ENCODE measurements at regions of chr15 and their contacts with region 1.

Region 1: GRCh38 chr15:77118882-77119321 is 48.0 kb upstream of the TSPAN3 start:
- DNase-seq: peak in 2 of 5 donors; percentile 37 to 38
- ATAC-seq: peak; percentile 72 to 79 (median 76)
- H3K4me3 ChIP-seq: no peak overlapping the region
- H3K27ac ChIP-seq: peak overlapping the region in 1 of 12 donors; percentile 4
- H3K4me1 ChIP-seq: peaks cover 0 to 34% (median 17%) of the 10 kb centered on the region in 12 donors
- H3K27me3 ChIP-seq: no peaks in the 10 kb centered on the region
- CTCF ChIP-seq: peak; percentile 49 to 88 (median 75)
- POLR2A ChIP-seq: no peak

Region 2: DNA sequence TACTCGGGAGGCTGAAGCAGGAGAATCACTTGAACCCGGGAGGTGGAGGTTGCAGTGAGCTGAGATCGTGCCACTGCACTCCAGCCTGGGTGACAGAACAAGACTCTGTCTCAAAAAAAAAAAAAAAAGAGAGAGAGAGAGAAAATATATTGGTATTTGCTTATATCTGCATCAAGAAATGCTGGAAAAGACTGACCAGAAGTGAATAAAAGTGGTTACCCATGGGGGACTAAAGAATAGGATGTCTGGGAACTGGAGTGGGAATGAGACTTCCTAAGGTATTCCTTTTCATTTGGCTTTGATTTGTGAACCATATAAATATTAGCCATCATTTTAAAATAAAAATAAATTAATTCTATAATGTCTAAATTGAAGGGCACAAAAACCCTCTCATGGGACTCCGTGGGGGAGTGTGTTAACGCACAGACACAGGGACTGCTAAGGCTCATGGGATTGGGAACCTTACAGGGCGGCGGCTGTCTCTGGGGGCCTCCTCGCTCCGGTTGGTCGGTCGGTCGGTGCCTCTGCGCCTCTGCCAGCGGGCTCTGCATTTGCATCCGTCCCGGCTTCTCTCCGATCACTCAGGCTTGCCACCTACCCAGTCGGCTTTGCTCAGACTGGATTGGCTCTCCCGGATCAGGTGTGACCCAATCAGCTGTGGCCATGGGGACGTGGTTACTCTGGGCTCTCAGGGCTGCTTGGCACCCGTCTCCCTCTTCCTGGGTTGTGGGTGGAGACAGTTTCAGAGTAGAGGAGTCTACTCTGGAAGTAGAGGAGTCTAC is 35.3 kb before region 1 on chr15:
- intact Hi-C with region 1: no loop called
- DNase-seq: peak; percentile 82 to 93 (median 87)
- ATAC-seq: peak; percentile 98 to 99 (median 99)
- H3K4me3 ChIP-seq: peak overlapping the region in 11 of 12 donors; percentile 4 to 52 (median 33)
- H3K27ac ChIP-seq: peak overlapping the region in 11 of 12 donors; percentile 2 to 58 (median 40)
- H3K4me1 ChIP-seq: peaks cover 0 to 12% (median 8%) of the 10 kb centered on the region in 12 donors
- H3K27me3 ChIP-seq: no peaks in the 10 kb centered on the region
- CTCF ChIP-seq: no peak
- POLR2A ChIP-seq: no peak

Region 3: GRCh38 chr15:77168616-77169015 is 49.7 kb after region 1 on chr15:
- intact Hi-C with region 1: loop called in 1 of 10 experiments (anchors 5 kb)
- DNase-seq: no peak
- ATAC-seq: no peak
- H3K4me3 ChIP-seq: no peak overlapping the region
- H3K27ac ChIP-seq: no peak overlapping the region
- H3K4me1 ChIP-seq: peaks cover 0 to 31% (median 10%) of the 10 kb centered on the region in 12 donors
- H3K27me3 ChIP-seq: no peaks in the 10 kb centered on the region
- CTCF ChIP-seq: no peak
- POLR2A ChIP-seq: no peak

Region 4: DNA sequence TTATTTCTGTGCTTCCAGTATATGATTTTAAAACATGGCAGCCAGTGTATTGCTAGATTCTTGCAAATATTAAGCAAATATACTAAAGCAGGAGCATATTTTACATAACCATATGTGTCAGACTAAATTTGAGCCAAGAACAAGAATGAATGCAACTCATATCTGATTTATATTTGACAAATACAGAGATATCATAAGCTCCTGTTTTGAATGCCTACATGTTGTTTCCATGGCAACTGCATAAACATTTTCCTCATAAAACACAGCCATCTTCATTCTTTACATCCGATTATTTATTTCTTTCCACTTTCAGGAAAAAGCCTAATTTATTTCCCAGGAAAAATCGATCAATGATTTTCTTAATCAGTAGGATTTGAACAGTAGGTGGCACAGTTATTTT is 124.2 kb after region 1 on chr15:
- intact Hi-C with region 1: no loop called
- DNase-seq: no peak
- ATAC-seq: no peak
- H3K4me3 ChIP-seq: no peak overlapping the region
- H3K27ac ChIP-seq: no peak overlapping the region
- H3K4me1 ChIP-seq: no peaks in the 10 kb centered on the region
- H3K27me3 ChIP-seq: no peaks in the 10 kb centered on the region
- CTCF ChIP-seq: no peak
- POLR2A ChIP-seq: no peak

Region 5: DNA sequence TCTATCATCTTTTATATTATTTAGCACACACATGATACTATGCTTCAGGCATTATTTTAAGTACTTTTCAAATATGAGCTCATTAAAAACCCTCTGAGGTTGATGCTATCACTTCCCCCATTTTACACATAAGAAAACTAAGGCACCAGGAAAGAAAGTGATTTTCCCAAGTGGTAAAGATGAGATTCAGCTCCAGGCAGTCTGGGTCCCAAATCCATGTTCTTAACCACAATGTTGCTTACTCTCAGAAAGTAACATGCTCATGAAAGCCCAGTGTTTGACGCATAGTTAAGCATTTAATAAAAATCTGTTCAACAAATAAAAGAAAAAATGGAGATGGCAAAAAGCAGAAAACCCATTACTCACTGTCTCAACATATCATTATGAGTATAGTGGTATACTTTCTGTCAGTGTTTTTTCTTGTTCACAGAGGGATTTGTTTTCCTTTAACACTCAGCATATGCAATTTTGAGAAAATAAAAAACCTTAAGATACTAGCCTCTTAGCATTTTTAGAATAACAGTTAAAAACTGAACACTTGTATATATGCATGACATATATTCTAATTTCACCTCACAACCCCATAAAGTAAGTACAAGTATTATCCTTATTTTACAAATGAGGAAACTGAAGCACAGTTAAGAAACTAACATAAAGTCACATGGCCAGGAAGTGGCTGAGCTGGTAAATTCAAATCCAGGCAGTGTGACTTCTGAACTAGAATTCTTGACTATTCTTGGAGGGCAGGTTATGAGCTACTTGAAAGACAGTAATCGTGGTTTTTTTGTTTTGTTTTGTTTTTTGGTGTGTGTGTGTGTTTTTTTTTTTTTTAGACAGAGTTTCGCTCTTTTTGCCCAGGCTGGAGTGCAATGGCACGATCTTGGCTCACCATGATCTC is 290.6 kb after region 1 on chr15:
- intact Hi-C with region 1: loop called in 2 of 10 experiments (anchors 5 to 10 kb)
- DNase-seq: no peak
- ATAC-seq: no peak
- H3K4me3 ChIP-seq: no peak overlapping the region
- H3K27ac ChIP-seq: peak overlapping the region in 1 of 12 donors; percentile 60
- H3K4me1 ChIP-seq: peaks cover 0 to 59% (median 45%) of the 10 kb centered on the region in 12 donors
- H3K27me3 ChIP-seq: no peaks in the 10 kb centered on the region
- CTCF ChIP-seq: no peak
- POLR2A ChIP-seq: no peak

Region 6: DNA sequence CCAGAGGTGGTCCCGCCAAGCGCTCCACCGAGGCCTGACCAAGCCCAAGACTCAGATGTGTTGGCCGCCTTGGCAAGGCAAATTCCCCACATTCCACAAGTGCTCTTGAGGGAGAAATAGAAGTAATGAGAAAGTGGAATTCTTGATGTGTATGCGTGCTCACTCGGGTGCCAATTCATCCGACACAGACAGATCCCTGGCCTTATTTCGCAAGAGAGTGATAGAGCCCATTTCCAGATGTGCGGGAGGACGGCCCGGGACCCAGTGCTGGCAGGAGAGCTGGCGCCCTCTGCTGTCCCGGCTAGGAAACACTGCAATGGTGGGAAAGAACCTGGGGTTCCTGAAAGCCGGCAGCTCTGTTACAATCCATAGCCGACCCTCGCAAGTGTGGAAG is 377.8 kb after region 1 on chr15:
- intact Hi-C with region 1: loop called in 8 of 10 experiments (anchors 2 to 10 kb)
- DNase-seq: peak; percentile 88 to 92 (median 90)
- ATAC-seq: peak; percentile 77 to 85 (median 82)
- H3K4me3 ChIP-seq: peak overlapping the region in 9 of 12 donors; percentile 8 to 39 (median 22)
- H3K27ac ChIP-seq: peak overlapping the region; percentile 53 to 96 (median 90)
- H3K4me1 ChIP-seq: peaks cover 3 to 85% (median 67%) of the 10 kb centered on the region in 12 donors
- H3K27me3 ChIP-seq: no peaks in the 10 kb centered on the region
- CTCF ChIP-seq: peak; percentile 92 to 98 (median 96)
- POLR2A ChIP-seq: no peak

Region 7: GRCh38 chr15:77543159-77543882 is 424.4 kb after region 1 on chr15:
- intact Hi-C with region 1: loop called (anchors 1 to 5 kb)
- DNase-seq: peak; percentile 87 to 94 (median 90)
- ATAC-seq: peak; percentile 77 to 93 (median 90)
- H3K4me3 ChIP-seq: peak overlapping the region in 11 of 12 donors; percentile 7 to 57 (median 44)
- H3K27ac ChIP-seq: peak overlapping the region in 11 of 12 donors; percentile 53 to 86 (median 68)
- H3K4me1 ChIP-seq: peaks cover 4 to 54% (median 48%) of the 10 kb centered on the region in 12 donors
- H3K27me3 ChIP-seq: no peaks in the 10 kb centered on the region
- CTCF ChIP-seq: peak in 11 of 12 donors; percentile 90 to 99 (median 97)
- POLR2A ChIP-seq: peak in 1 of 2 donors; percentile 26

Region 8: DNA sequence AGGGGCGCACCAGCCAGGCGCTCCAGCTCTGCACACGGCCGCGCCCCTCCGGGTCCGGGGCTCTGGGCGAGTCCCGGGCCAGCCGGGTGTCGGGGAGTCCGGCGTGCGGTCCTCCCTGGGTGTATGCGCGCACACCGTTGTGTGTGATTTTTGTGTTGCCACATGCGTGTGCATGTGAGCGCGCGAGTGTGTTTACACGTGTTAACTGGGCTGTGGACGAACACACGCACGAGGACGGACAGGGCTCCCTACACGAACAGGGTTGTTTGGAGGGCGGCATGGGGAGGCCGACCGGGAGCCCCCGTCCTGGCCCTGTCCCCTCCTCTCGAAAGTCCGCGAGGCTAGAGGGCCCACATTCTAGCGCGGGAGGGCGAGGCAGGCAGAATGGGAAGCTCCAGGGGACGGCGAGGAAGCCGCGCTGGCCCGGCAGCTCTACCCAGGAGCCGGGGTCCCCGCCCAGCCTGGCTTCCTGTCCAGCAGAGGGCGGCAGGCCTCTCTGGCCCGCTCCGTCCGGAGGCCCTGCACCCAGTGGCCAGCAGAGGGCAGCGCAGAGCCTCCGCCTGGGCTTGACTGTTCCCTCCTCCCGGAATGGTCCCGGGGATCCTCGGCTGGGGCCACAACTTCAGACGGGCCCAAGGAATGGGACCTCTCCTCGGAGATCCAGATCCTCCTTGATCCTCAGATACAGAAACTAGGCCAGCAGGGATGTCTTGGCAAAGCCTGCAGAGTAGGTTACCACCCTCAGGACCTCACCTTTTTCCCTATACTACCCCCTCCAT is 514.4 kb after region 1 on chr15:
- intact Hi-C with region 1: loop called in 3 of 10 experiments (anchors 10 kb)
- DNase-seq: peak; percentile 89 to 95 (median 90)
- ATAC-seq: peak; percentile 86 to 97 (median 94)
- H3K4me3 ChIP-seq: peak overlapping the region; percentile 40 to 65 (median 56)
- H3K27ac ChIP-seq: peak overlapping the region in 6 of 12 donors; percentile 5 to 65 (median 51)
- H3K4me1 ChIP-seq: peaks cover 0 to 37% (median 11%) of the 10 kb centered on the region in 12 donors
- H3K27me3 ChIP-seq: peaks cover 5 to 54% (median 30%) of the 10 kb centered on the region in 9 donors
- CTCF ChIP-seq: peak; percentile 100
- POLR2A ChIP-seq: no peak